CD4-positive, alpha-beta memory T cell (primary cell): ENCODE measurements at regions of chr19 and their contacts with region 1.

Region 1: GRCh38 chr19:49473868-49474544 is at the start of gene FLT3LG:
- DNase-seq: peak; percentile 96 to 97 (median 97)
- H3K4me3 ChIP-seq: peak within 1 kb of the TSS; percentile 77 to 94
- H3K4me3 Mint-ChIP-seq: peak within 1 kb of the TSS; percentile 90 to 99 (median 94)
- H3K27ac ChIP-seq: peak within 1 kb of the TSS; percentile 96
- H3K27ac Mint-ChIP-seq: peak within 1 kb of the TSS; percentile 91 to 99 (median 98)
- H3K4me1 ChIP-seq: peaks cover 64% of the 10 kb centered on the region
- H3K4me1 Mint-ChIP-seq: peaks cover 27 to 71% (median 46%) of the 10 kb centered on the region in 4 donors
- H3K27me3 ChIP-seq: no peaks in the 10 kb centered on the region
- H3K27me3 Mint-ChIP-seq: no peaks in the 10 kb centered on the region
- total RNA-seq, gene FLT3LG: 114 to 115 TPM

Region 2: GRCh38 chr19:49272184-49272583 is 201.8 kb before region 1 on chr19:
- CTCF ChIA-PET with region 1: no interaction called
- POLR2A ChIA-PET with region 1: no interaction called
- intact Hi-C with region 1: loop called (anchors 2 kb)
- DNase-seq: no peak
- H3K4me3 ChIP-seq: no peak overlapping the region
- H3K4me3 Mint-ChIP-seq: no peak overlapping the region
- H3K27ac ChIP-seq: no peak overlapping the region
- H3K27ac Mint-ChIP-seq: no peak overlapping the region
- H3K4me1 ChIP-seq: no peaks in the 10 kb centered on the region
- H3K4me1 Mint-ChIP-seq: no peaks in the 10 kb centered on the region
- H3K27me3 ChIP-seq: no peaks in the 10 kb centered on the region
- H3K27me3 Mint-ChIP-seq: peaks cover 3 to 11% of the 10 kb centered on the region in 2 donors

Region 3: GRCh38 chr19:49443366-49444099 is 30.5 kb before region 1 on chr19:
- CTCF ChIA-PET with region 1: interaction called, 227 read pairs
- POLR2A ChIA-PET with region 1: interaction called, 26 read pairs
- intact Hi-C with region 1: loop called (anchors 1 kb)
- DNase-seq: peak; percentile 93 to 95 (median 94)
- H3K4me3 ChIP-seq: peak overlapping the region in 1 of 2 donors; percentile 72
- H3K4me3 Mint-ChIP-seq: peak overlapping the region; percentile 78 to 93 (median 82)
- H3K27ac ChIP-seq: peak overlapping the region; percentile 25
- H3K27ac Mint-ChIP-seq: peak overlapping the region; percentile 88 to 96 (median 93)
- H3K4me1 ChIP-seq: peaks cover 31% of the 10 kb centered on the region
- H3K4me1 Mint-ChIP-seq: peaks cover 18 to 56% (median 34%) of the 10 kb centered on the region in 4 donors
- H3K27me3 ChIP-seq: peaks cover 36% of the 10 kb centered on the region
- H3K27me3 Mint-ChIP-seq: peaks cover 31 to 41% of the 10 kb centered on the region in 2 donors

Region 4: DNA sequence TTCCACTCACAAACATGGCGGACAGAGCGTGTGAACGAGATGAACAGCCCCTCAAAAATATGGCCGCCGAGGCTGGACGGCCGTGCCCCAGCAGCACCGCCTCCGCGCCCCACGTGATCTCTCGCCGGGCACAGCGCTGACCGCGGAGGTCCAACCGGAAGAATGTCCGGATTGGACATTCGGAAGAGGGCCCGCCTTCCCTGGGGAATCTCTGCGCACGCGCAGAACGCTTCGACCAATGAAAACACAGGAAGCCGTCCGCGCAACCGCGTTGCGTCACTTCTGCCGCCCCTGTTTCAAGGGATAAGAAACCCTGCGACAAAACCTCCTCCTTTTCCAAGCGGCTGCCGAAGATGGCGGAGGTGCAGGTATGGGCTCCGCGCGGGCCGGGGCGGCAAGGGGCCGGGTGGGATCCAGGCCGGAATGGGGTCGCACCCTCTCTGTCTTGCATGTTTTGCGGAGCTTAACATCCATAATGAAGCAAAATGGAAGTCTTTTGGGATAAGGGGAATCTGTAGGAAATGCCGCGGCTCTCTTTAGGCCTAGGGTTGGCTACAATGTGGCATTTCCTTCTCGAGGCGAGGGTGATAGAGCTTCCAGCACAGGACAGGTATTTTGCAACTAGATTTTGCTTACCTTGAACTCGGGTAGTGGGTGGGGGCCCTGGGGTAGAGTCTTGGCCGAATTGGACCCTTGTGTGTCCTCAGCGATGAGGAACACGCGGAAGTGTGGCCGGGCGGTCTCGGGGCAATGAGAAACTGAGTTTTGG is 13.5 kb after region 1 on chr19 and contains the start of gene RPL13A:
- CTCF ChIA-PET with region 1: interaction called, 13 read pairs
- POLR2A ChIA-PET with region 1: interaction called, 79 read pairs
- intact Hi-C with region 1: loop called (anchors 1 kb)
- DNase-seq: peak; percentile 98 to 100 (median 100)
- H3K4me3 ChIP-seq: peak within 1 kb of the TSS; percentile 98 to 99
- H3K4me3 Mint-ChIP-seq: peak within 1 kb of the TSS; percentile 94 to 100 (median 98)
- H3K27ac ChIP-seq: peak within 1 kb of the TSS; percentile 85
- H3K27ac Mint-ChIP-seq: peak within 1 kb of the TSS; percentile 95 to 98 (median 98)
- H3K4me1 ChIP-seq: peaks cover 39% of the 10 kb centered on the region
- H3K4me1 Mint-ChIP-seq: peaks cover 18 to 55% (median 36%) of the 10 kb centered on the region in 4 donors
- H3K27me3 ChIP-seq: no peaks in the 10 kb centered on the region
- H3K27me3 Mint-ChIP-seq: no peaks in the 10 kb centered on the region
- total RNA-seq, gene RPL13A: 5,517 to 5,661 TPM

Region 5: GRCh38 chr19:49502866-49503581 is 29.0 kb after region 1 on chr19:
- CTCF ChIA-PET with region 1: interaction called, 14 read pairs
- POLR2A ChIA-PET with region 1: interaction called, 3 read pairs
- intact Hi-C with region 1: no loop called
- DNase-seq: peak; percentile 65 to 79 (median 74)
- H3K4me3 ChIP-seq: no peak overlapping the region
- H3K4me3 Mint-ChIP-seq: peak overlapping the region; percentile 6 to 100 (median 36)
- H3K27ac ChIP-seq: peak overlapping the region; percentile 95
- H3K27ac Mint-ChIP-seq: peak overlapping the region; percentile 91 to 100 (median 99)
- H3K4me1 ChIP-seq: peaks cover 52% of the 10 kb centered on the region
- H3K4me1 Mint-ChIP-seq: peaks cover 16 to 61% (median 33%) of the 10 kb centered on the region in 4 donors
- H3K27me3 ChIP-seq: no peaks in the 10 kb centered on the region
- H3K27me3 Mint-ChIP-seq: no peaks in the 10 kb centered on the region